ENCODE measurements at regions of chr3 and their contacts with region 1.

Region 1: GRCh38 chr3:44529927-44530326 is 25.1 kb upstream of the ZKSCAN7 start:
- DNase-seq: no peak
- H3K4me3 ChIP-seq: no peak overlapping the region
- CTCF ChIP-seq: no peak
- POLR2A ChIP-seq: no peak

Region 2: DNA sequence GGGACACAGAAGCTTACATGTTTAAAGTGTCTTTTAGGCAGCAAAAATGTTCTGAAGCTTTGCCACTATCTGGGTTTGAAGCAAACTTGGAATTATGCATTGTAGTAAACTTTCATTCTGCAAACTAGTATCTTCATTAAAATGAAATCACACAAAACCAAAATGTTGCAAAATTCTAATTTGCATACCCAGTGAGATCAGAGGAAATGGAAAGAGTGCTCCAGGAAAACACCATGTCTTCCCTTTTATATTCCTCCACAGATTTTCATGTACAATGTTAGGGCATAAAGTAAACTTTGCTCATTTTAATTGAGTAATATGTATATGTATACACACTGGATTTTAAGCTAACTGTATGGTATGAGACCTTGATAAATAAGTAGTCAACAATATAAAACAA is 932.0 kb before region 1 on chr3:
- intact Hi-C with region 1: no loop called
- DNase-seq: no peak
- H3K4me3 ChIP-seq: no peak overlapping the region
- CTCF ChIP-seq: no peak
- POLR2A ChIP-seq: no peak

Region 3: GRCh38 chr3:44237665-44238064 is 292.3 kb before region 1 on chr3:
- intact Hi-C with region 1: no loop called
- DNase-seq: no peak
- H3K4me3 ChIP-seq: no peak overlapping the region
- CTCF ChIP-seq: no peak
- POLR2A ChIP-seq: no peak

Region 4: GRCh38 chr3:44568561-44568960 is 38.6 kb after region 1 on chr3:
- intact Hi-C with region 1: no loop called
- DNase-seq: no peak
- H3K4me3 ChIP-seq: no peak overlapping the region
- CTCF ChIP-seq: no peak
- POLR2A ChIP-seq: no peak

Region 5: GRCh38 chr3:44913868-44914468 is 384.0 kb after region 1 on chr3:
- intact Hi-C with region 1: loop called (anchors 10 kb)
- DNase-seq: peak in 1 of 2 donors; percentile 27
- H3K4me3 ChIP-seq: no peak overlapping the region
- CTCF ChIP-seq: no peak
- POLR2A ChIP-seq: no peak